Activated T-helper 1 cell treated with anti-CD3 and anti-CD28 coated beads, Interleukin-12 subunit alpha, Interleukin-12 subunit beta, Interleukin-2, Interleukin-4 antibody, amounts not matched to agents 30 ng/mL and 10 ng/mL and 1 ng/mL, durations not matched to agents 14 hours and 24 hours and 36 hours (primary cell): ENCODE measurements at regions of chr1 and their contacts with region 1.

Region 1: DNA sequence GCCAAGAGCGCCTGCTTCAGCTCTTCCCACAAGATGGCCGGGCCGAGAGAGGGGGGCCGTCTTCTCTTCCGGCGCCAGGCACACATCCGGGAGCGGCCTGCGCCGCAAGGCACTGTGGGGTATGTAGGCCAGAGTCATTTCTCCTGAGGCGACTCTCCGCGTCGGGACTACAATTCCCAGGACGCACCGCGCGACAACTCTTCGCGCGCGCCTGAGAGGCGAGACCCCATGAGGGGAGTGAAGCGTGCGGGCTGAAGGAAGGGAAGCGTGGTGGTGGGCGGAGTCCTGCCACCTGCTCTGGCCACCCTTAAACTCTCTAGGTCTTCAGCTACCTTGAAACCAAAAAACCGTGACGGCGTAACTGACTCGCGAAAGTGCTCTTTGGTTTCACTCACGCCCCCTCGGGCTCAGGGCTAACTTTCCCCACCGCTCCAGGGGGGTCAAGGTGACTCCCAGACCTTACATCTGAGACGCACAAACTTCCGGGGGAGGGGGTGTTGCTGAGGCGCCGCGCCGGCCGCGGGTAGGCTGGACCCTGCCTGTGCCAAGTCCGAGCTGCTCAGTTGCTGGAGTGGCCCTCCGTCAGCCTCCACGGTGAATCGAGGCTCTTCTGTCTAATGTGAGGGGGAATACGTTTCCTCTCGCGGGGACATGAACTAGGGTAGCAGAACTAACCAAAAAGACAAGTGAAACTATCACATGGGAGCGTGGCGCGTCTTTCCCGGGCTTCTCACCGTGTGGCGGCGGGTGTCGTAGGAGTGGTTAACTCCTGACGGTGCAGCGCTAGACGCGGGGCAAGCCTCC is at the start of gene SERBP1:
- DNase-seq: peak; percentile 95
- H3K4me3 Mint-ChIP-seq: peak within 1 kb of the TSS; percentile 90
- H3K27ac Mint-ChIP-seq: peak within 1 kb of the TSS; percentile 97
- H3K4me1 Mint-ChIP-seq: peaks cover 62% of the 10 kb centered on the region
- H3K27me3 Mint-ChIP-seq: no peaks in the 10 kb centered on the region
- total RNA-seq, gene SERBP1: 585 and 603 TPM in 2 replicates

Region 2: DNA sequence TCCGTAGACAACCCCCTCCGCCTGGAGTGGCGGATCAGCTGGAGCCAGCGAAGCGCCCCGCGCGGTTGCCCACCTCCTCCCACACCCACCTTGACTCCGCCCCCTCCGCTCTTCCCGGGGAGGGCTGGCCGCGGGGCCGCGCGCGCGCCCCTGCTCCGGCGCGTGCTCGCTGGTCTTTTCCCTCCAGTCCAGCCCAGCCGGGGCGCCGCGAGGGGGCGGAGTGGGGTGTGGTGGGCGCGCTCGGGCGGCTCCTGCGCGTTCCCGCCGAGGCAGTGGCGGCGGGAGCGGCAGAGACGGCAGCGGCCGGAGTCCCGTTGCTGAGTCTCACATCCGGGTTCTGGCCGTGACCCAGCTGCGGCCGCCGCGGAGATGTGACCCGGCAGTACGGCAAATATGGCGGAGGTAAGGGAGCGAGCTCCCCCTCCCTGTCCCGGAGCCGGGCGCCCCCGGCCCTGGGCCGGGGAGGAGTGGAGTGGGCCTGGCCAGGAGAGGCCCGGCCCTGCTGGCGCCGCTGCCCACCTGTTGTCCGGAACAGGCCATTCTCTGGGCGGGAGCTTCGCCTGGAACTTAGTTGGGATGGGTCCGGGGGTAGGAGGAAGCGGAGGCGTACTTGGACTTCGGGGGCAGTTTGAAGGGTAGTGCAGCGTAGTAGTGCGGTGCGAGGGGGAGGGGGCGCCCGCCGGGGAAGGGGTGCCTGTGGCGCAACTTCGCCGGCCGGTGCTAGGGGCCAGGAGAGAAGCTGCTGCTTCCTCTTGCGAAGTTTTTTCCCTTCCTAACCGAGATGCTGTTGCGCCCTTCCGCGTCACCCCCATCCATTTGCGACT is 500.3 kb before region 1 on chr1:
- intact Hi-C with region 1: loop called (anchors 1 kb)
- DNase-seq: peak; percentile 93
- H3K4me3 Mint-ChIP-seq: peak overlapping the region; percentile 89
- H3K27ac Mint-ChIP-seq: peak overlapping the region; percentile 93
- H3K4me1 Mint-ChIP-seq: peaks cover 72% of the 10 kb centered on the region
- H3K27me3 Mint-ChIP-seq: no peaks in the 10 kb centered on the region

Region 3: GRCh38 chr1:67174716-67175284 is 255.8 kb before region 1 on chr1:
- intact Hi-C with region 1: loop called (anchors 2 kb)
- DNase-seq: no peak
- H3K4me3 Mint-ChIP-seq: peak overlapping the region; percentile 76
- H3K27ac Mint-ChIP-seq: peak overlapping the region; percentile 98
- H3K4me1 Mint-ChIP-seq: peaks cover 68% of the 10 kb centered on the region
- H3K27me3 Mint-ChIP-seq: no peaks in the 10 kb centered on the region

Region 4: GRCh38 chr1:67332653-67333529 is 97.7 kb before region 1 on chr1:
- intact Hi-C with region 1: loop called (anchors 2 kb)
- DNase-seq: peak; percentile 64
- H3K4me3 Mint-ChIP-seq: peak overlapping the region; percentile 27
- H3K27ac Mint-ChIP-seq: peak overlapping the region; percentile 99
- H3K4me1 Mint-ChIP-seq: peaks cover 77% of the 10 kb centered on the region
- H3K27me3 Mint-ChIP-seq: no peaks in the 10 kb centered on the region

Region 5: GRCh38 chr1:67418839-67419586 is 11.5 kb before region 1 on chr1:
- intact Hi-C with region 1: loop called (anchors 1 kb)
- DNase-seq: no peak
- H3K4me3 Mint-ChIP-seq: no peak overlapping the region
- H3K27ac Mint-ChIP-seq: peak overlapping the region; percentile 48
- H3K4me1 Mint-ChIP-seq: peaks cover 61% of the 10 kb centered on the region
- H3K27me3 Mint-ChIP-seq: no peaks in the 10 kb centered on the region